ENCODE measurements at regions of chr11 and their contacts with region 1.

Region 1: GRCh38 chr11:61834278-61835048 is 6.4 kb downstream of the FADS2 start:
- DNase-seq: peak in 1 of 2 experiments; percentile 55
- H3K4me3 ChIP-seq: peak overlapping the region in 1 of 4 experiments; percentile 5; a peak in 1 of 8 replicates
- H3K27ac ChIP-seq: peak overlapping the region; percentile 73
- H3K4me1 ChIP-seq: peaks cover 11 to 44% (median 26%) of the 10 kb centered on the region in 4 experiments
- H3K27me3 ChIP-seq: no peaks in the 10 kb centered on the region
- CTCF ChIP-seq: no peak
- EP300 ChIP-seq: no peak
- POLR2A ChIP-seq: peak in 1 of 2 experiments; percentile 39; a peak in 1 of 3 replicates
- RAD21 ChIP-seq: no peak

Region 2: DNA sequence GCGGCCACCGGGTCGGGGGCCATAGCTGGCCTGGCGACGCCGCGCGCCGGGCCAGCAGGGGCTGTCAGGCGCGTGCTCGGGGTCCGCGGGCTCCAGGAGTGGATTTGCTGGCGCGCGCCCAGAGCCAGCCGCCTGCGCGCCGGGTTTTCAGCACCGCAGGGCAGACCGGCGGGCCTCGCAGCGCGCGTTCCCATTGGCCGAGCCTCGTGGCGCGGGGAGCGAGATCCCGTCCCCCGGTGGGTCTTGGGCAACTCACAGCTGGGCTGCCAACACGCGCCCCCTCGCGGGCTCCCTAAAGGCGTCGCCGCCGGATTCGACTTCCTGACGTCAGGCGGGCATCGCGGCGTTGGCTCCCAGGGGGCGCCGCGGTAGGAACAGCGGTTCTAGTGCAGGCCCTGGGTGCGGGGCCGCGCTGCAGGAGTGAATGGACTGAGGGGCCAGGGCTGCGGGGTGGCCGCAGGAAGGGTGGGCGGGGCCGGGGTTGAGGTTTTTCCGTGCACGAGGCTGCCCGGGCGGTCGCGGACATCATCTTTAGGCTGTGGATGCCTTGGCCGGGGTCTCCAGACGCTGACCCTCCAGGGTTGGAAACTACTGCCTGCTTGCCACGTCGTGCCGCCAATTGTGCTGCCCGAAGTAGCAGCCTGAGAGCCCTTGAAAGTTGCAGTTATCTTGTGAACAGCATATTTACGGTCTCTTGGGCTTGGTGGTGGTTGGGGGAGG is 17.6 kb before region 1 on chr11 and contains the start of gene FADS1:
- CTCF ChIA-PET with region 1: interaction called, 16 read pairs
- POLR2A ChIA-PET with region 1: interaction called, 210 read pairs
- DNase-seq: peak; percentile 89 to 92
- H3K4me3 ChIP-seq: peak within 1 kb of the TSS; percentile 74 to 92 (median 76)
- H3K27ac ChIP-seq: peak within 1 kb of the TSS; percentile 85
- H3K4me1 ChIP-seq: peaks cover 2 to 9% (median 5%) of the 10 kb centered on the region in 4 experiments; a peak in 5 of 7 replicates
- H3K27me3 ChIP-seq: no peaks in the 10 kb centered on the region
- CTCF ChIP-seq: peak; percentile 51 to 62 (median 57)
- EP300 ChIP-seq: 0 out of 3 replicates have a peak, but pooled peaks of 1 of the 2 experiments have one; percentile 21
- POLR2A ChIP-seq: peak in 1 of 2 experiments; percentile 17; a peak in 2 of 3 replicates
- RAD21 ChIP-seq: peak in 1 of 2 experiments; percentile 23; a peak in 2 of 4 replicates
- total RNA-seq, gene FADS1: 115 and 116 TPM in 2 replicates